Right lobe of liver (tissue), 6 donors: ENCODE measurements at regions of chr2 and their contacts with region 1.

Region 1: GRCh38 chr2:11411768-11412448 is 54.1 kb downstream of the E2F6 start:
- DNase-seq: peak in 1 of 3 donors; percentile 60
- ATAC-seq: peak; percentile 82 to 92 (median 88)
- H3K4me3 ChIP-seq: peak overlapping the region; percentile 6 to 40 (median 30)
- H3K27ac ChIP-seq: peak overlapping the region in 1 of 3 donors; percentile 7
- H3K4me1 ChIP-seq: peaks cover 0 to 5% (median 0%) of the 10 kb centered on the region in 4 donors
- H3K27me3 ChIP-seq: no peaks in the 10 kb centered on the region
- CTCF ChIP-seq: peak; percentile 78 to 83 (median 80)
- POLR2A ChIP-seq: no peak

Region 2: GRCh38 chr2:11234309-11234708 is 177.6 kb before region 1 on chr2:
- intact Hi-C with region 1: loop called (anchors 5 to 10 kb)
- DNase-seq: no peak
- ATAC-seq: peak; percentile 59 to 77 (median 68)
- H3K4me3 ChIP-seq: no peak overlapping the region
- H3K27ac ChIP-seq: no peak overlapping the region
- H3K4me1 ChIP-seq: peaks cover 0 to 4% (median 0%) of the 10 kb centered on the region in 4 donors
- H3K27me3 ChIP-seq: no peaks in the 10 kb centered on the region
- CTCF ChIP-seq: peak; percentile 54 to 64 (median 58)
- POLR2A ChIP-seq: no peak